Upper lobe of right lung (tissue), 1 donor: ENCODE measurements at regions of chr7 and their contacts with region 1.

Region 1: DNA sequence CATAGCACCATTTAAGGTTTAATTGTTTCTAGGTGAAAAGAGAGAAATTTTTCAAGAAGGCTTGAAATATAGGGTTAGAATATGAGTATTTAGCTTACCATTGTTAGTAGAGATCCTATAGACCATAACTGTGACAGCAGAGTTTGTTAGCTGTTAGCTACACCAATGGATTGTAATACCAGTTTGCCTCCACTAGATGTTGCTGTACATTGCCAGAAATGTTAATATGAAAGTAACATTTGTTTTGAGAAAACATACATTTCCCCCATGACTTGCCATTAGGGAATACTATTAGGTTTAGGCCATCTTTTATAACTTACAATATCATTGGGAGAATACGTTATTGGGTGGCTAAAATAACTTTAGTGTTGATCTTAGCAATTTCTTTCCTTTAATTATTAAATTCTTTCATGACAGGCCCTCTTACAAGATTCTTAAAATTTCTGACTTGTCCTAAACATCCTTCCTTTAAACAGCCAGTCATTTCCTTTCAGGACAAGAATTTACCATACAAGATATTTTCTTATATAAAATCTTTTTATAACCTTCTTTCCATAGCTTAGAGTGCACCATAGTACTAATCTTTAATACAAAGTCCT is 39.5 kb downstream of the ZNF117 start:
- DNase-seq: no peak
- ATAC-seq: peak; percentile 87
- H3K4me3 ChIP-seq: no peak overlapping the region
- H3K27ac ChIP-seq: no peak overlapping the region
- H3K4me1 ChIP-seq: peaks cover 10% of the 10 kb centered on the region
- H3K27me3 ChIP-seq: peaks cover 19% of the 10 kb centered on the region
- CTCF ChIP-seq: peak; percentile 89

Region 2: GRCh38 chr7:64515330-64515729 is 436.0 kb before region 1 on chr7:
- intact Hi-C with region 1: no loop called
- DNase-seq: no peak
- ATAC-seq: no peak
- H3K4me3 ChIP-seq: no peak overlapping the region
- H3K27ac ChIP-seq: no peak overlapping the region
- H3K4me1 ChIP-seq: no peaks in the 10 kb centered on the region
- H3K27me3 ChIP-seq: no peaks in the 10 kb centered on the region
- CTCF ChIP-seq: no peak

Region 3: GRCh38 chr7:65307651-65308299 is 356.4 kb after region 1 on chr7:
- intact Hi-C with region 1: loop called (anchors 5 kb)
- DNase-seq: no peak
- ATAC-seq: peak; percentile 85
- H3K4me3 ChIP-seq: no peak overlapping the region
- H3K27ac ChIP-seq: no peak overlapping the region
- H3K4me1 ChIP-seq: peaks cover 3% of the 10 kb centered on the region
- H3K27me3 ChIP-seq: peaks cover 6% of the 10 kb centered on the region
- CTCF ChIP-seq: peak; percentile 79